Left ventricle myocardium superior (tissue), 1 donor: ENCODE measurements at regions of chr11 and their contacts with region 1.

Region 1: DNA sequence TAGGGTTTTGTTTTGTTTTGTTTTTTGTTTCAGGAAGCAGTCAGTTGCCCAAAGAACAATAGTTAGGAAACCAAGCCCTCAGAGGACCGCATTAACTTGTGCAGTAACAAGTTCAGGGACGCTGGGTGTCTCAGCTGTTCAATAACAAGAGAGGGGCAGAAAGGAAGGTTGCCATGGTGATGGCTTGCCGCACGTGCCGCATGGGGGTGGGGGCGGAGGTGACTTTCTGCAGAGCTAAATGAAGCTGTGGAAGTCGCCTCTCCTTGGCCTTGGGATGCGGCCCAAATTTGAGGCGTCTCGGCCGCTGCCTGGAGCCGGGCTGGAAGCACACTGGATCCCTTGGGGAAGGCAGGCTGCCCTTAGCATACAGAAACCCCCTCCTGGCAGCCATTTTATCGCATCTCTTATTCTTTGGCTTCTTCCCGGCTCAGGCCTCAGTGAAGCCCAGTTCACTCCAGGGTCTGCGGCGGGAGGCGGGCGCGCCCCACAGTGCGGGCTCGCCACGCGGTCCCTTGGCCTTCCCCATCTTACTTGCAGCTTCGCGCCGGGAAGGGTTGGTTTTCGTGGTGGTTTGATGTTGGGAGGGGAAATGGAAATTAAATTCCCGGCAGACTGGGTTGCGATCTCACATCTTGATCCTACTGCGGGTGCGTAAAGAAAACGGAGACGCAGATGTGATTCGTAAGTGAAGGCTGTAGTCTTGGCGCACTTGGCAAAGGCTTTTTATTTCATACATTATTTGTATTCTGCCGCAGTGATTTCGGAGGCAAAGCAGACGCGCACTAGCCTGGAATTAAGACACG is 94.3 kb downstream of the SLC17A6 start:
- DNase-seq: peak; percentile 46
- ATAC-seq: peak; percentile 75

Region 2: DNA sequence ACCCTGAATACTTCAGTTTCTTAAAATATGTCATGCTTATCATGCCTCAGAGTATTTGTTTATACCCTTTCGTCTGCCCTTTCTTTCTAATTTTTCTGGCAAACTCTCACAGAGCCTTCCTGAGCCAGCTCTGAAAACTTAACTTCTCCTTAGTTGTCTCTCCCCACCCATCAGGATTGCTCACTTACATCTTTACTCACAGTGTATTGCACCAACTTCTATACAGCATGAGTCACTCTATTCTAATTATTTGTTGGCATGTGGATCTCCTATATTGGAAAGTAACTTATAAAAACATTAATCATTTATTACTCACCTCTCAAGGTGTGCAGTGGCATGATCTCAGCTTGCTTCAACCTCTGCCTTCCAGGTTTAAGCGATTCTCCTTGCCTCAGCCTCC is 78.2 kb after region 1 on chr11:
- intact Hi-C with region 1: no loop called
- DNase-seq: no peak
- ATAC-seq: no peak

Region 3: DNA sequence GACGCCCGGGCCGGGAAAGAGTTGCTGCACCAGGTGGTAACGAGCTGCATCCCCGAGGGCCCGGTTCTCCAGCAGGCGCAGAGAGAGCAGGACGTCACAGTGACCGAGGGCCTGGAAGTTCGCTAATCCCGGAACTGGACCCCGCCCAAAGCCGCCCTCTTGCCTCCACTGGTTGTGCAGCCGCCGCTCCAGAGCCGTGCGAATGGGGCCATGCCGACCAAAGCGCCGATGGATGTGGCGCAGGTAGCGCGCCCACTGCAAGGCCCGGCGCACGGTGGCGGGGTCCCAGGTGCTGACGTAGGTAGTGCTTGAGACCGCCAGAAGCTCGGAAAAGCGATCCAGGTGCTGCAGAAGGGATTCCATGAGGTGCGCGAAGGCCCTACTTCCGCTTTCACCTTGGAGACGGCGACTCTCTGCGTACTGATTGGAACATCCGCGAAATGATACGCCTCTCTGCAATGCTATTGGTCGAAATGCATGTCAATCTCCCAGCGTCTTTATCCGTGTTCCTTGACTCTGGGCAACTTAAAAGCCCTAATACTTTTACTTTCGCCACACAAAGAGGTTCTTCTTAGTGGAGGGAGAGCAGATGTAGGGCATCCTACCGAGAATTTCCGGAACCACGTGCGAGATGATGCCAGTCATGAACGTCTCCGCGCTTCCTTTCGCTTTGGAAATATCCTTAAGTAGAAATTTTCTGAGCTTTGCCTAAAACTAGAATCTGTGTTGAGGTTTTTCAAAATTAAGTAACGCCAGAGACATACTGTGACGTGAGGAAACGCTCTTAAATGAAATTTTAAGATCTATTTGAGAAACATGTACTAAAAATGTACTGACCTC is 193.2 kb after region 1 on chr11 and contains the start of gene FANCF:
- intact Hi-C with region 1: loop called (anchors 10 kb)
- DNase-seq: peak; percentile 91
- ATAC-seq: peak; percentile 99
- total RNA-seq, gene FANCF: 5.3 TPM

Region 4: GRCh38 chr11:23021287-23021863 is 588.9 kb after region 1 on chr11:
- intact Hi-C with region 1: no loop called
- DNase-seq: no peak
- ATAC-seq: no peak